SK-N-SH (cell line): ENCODE measurements at regions of chr2 and their contacts with region 1.

Region 1: DNA sequence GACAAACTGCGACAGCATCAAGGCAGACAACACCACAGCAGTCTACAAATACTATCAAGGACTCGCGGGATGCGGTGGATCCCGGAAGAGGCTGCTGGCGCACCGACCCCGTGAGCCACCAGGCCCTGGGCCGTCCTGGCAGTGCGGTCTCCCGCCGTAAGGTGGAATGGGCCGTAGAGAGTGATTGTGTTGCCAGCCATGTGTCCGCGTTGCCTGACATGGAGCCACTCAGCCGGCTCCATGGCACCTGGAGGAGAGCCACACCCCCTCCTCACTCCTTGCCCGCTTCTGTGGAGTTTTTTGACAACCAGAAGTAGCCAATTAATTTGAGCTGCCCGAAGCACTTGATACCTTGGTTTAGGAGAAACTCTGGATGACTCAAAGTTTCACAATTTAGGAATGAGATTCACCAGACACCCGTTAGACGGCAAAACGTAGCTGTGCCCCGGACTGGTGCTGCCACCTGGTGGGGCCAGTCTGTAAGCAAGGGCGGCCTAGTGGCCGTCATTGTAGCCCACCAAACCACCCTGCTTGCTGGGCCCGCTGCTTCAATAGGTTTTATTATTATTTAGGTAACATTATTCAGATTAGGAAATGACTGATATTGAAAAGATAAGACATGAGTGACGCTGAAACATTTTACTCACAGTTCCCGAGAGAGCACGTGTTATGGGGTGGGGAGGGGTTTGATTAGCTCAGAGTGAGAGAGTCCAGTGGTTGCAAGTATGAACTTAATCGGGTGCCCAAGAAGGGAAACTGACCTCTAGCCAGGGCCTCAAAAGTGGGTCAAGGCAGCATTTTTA is 10.2 kb upstream of the IMP4 start:
- DNase-seq: peak; percentile 88
- H3K4me3 ChIP-seq: no peak overlapping the region; a peak in 2 of 4 replicates
- H3K27ac ChIP-seq: no peak overlapping the region; a peak in 1 of 4 replicates
- H3K4me1 ChIP-seq: peaks cover 0 to 8% of the 10 kb centered on the region in 2 experiments; a peak in 1 of 4 replicates
- H3K27me3 ChIP-seq: peaks cover 7% of the 10 kb centered on the region; the same call in 1 of the 2 replicates
- CTCF ChIP-seq: peak; percentile 96
- EP300 ChIP-seq: no peak
- RAD21 ChIP-seq: peak; percentile 97

Region 2: GRCh38 chr2:129936334-129936934 is 396.0 kb before region 1 on chr2:
- CTCF ChIA-PET with region 1: interaction called, 19 read pairs
- POLR2A ChIA-PET with region 1: no interaction called
- DNase-seq: peak; percentile 53
- H3K4me3 ChIP-seq: no peak overlapping the region
- H3K27ac ChIP-seq: no peak overlapping the region
- H3K4me1 ChIP-seq: peaks cover 0 to 12% of the 10 kb centered on the region in 2 experiments; a peak in 1 of 4 replicates
- H3K27me3 ChIP-seq: no peaks in the 10 kb centered on the region
- CTCF ChIP-seq: peak; percentile 64
- EP300 ChIP-seq: no peak
- RAD21 ChIP-seq: peak; percentile 76

Region 3: DNA sequence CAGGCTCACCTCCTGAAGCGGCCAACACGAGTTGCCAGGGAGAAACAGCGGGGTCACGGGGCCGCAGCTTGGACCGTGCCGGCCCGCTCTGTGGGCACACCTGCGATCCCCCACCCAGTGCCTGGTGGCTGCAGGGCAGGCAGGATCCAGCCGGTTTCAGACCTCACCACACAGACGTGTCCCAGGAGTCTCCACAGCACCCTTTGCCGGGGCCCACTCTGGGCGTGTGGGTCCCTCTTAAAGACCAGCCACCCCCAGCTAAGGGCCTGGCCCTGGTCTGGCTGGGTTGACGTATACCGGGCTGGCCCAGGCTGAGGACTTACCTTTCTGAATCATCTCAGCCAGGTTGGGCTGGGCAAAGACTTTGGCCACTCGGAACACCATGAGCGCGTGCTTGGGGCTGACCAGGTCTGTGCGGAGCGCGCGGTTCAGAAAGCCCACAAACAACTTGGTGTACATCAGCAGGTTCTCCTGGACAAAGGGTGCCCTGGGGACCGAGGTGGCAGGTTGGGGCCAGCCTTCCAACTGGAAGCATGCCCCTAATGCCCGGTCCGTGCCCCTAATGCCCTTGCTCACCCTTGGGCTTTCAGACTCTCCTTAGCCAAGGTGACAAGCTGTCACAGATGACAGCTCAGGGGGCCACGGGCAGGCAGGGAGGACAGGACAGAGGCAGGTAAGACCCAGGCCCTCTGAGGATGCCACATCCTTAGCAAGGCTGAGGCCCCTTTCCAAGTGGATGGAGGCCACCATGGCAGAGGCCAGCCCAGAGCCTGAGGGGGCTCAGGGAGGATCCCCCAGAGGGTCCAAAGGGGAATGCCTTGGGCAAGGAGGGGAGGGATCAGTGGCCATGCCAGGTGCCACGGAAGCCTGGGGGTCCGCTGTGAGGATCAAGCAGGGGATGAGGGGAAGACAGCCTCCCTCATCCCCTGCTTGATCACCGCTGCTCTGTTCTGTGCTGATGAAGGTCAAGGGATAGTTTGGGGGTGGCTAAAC is 177.4 kb before region 1 on chr2:
- CTCF ChIA-PET with region 1: interaction called, 10 read pairs
- POLR2A ChIA-PET with region 1: no interaction called
- DNase-seq: no peak
- H3K4me3 ChIP-seq: no peak overlapping the region
- H3K27ac ChIP-seq: no peak overlapping the region; a peak in 1 of 4 replicates
- H3K4me1 ChIP-seq: peaks cover 0 to 21% of the 10 kb centered on the region in 2 experiments; a peak in 1 of 4 replicates
- H3K27me3 ChIP-seq: no peaks in the 10 kb centered on the region
- CTCF ChIP-seq: no peak
- EP300 ChIP-seq: no peak
- RAD21 ChIP-seq: no peak

Region 4: GRCh38 chr2:130181325-130181879 is 151.1 kb before region 1 on chr2 and contains the start of gene SMPD4:
- CTCF ChIA-PET with region 1: interaction called, 113 read pairs
- POLR2A ChIA-PET with region 1: interaction called, 5 read pairs
- DNase-seq: peak; percentile 93
- H3K4me3 ChIP-seq: peak within 1 kb of the TSS; percentile 92 to 95
- H3K27ac ChIP-seq: peak within 1 kb of the TSS; percentile 52 to 92
- H3K4me1 ChIP-seq: peaks cover 0 to 25% of the 10 kb centered on the region in 2 experiments; a peak in 2 of 4 replicates
- H3K27me3 ChIP-seq: no peaks in the 10 kb centered on the region
- CTCF ChIP-seq: no peak
- EP300 ChIP-seq: no peak
- RAD21 ChIP-seq: no peak
- polyA plus RNA-seq, gene SMPD4: 33.1 and 43.0 TPM in 2 replicates

Region 5: GRCh38 chr2:130241041-130241707 is 91.3 kb before region 1 on chr2:
- CTCF ChIA-PET with region 1: no interaction called
- POLR2A ChIA-PET with region 1: no interaction called
- DNase-seq: no peak
- H3K4me3 ChIP-seq: no peak overlapping the region
- H3K27ac ChIP-seq: no peak overlapping the region
- H3K4me1 ChIP-seq: peaks cover 0 to 5% of the 10 kb centered on the region in 2 experiments; a peak in 1 of 4 replicates
- H3K27me3 ChIP-seq: no peaks in the 10 kb centered on the region
- CTCF ChIP-seq: no peak
- EP300 ChIP-seq: no peak
- RAD21 ChIP-seq: no peak

Region 6: DNA sequence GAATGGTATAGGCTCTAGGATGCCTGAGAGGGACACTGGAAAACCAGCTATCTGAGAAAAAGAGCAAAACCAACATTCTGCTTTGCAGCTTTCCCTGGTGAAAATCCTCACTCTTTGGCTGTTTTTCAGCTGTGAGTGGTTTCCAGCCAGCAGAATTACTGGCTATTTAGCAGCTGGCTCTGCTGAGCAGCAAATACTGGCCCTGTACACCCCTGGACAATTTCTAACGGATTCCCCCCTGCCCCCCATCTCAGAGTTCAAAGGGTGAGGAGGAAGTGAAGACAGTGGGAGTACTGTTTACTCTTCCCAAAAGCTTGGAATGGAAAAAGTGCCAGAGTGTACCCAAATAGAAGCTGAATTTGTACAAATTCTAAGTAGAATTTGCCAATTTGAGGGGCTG is 15.9 kb before region 1 on chr2:
- CTCF ChIA-PET with region 1: interaction called, 20 read pairs
- POLR2A ChIA-PET with region 1: no interaction called
- DNase-seq: no peak
- H3K4me3 ChIP-seq: no peak overlapping the region
- H3K27ac ChIP-seq: no peak overlapping the region
- H3K4me1 ChIP-seq: no peaks in the 10 kb centered on the region; a peak in 1 of 4 replicates
- H3K27me3 ChIP-seq: no peaks in the 10 kb centered on the region
- CTCF ChIP-seq: no peak
- EP300 ChIP-seq: no peak
- RAD21 ChIP-seq: no peak

Region 7: GRCh38 chr2:130365075-130365474 is 32.6 kb after region 1 on chr2:
- CTCF ChIA-PET with region 1: no interaction called
- POLR2A ChIA-PET with region 1: no interaction called
- DNase-seq: no peak
- H3K4me3 ChIP-seq: no peak overlapping the region
- H3K27ac ChIP-seq: no peak overlapping the region
- H3K4me1 ChIP-seq: no peaks in the 10 kb centered on the region
- H3K27me3 ChIP-seq: no peaks in the 10 kb centered on the region
- CTCF ChIP-seq: no peak
- EP300 ChIP-seq: no peak
- RAD21 ChIP-seq: no peak

Region 8: GRCh38 chr2:130380096-130380934 is 47.8 kb after region 1 on chr2:
- CTCF ChIA-PET with region 1: no interaction called
- POLR2A ChIA-PET with region 1: no interaction called
- DNase-seq: no peak
- H3K4me3 ChIP-seq: no peak overlapping the region
- H3K27ac ChIP-seq: no peak overlapping the region
- H3K4me1 ChIP-seq: peaks cover 0 to 9% of the 10 kb centered on the region in 2 experiments; a peak in 2 of 4 replicates
- H3K27me3 ChIP-seq: no peaks in the 10 kb centered on the region
- CTCF ChIP-seq: no peak
- EP300 ChIP-seq: no peak
- RAD21 ChIP-seq: no peak